Posterior cingulate gyrus (tissue), 11 donors: ENCODE measurements at regions of chr2 and their contacts with region 1.

Region 1: GRCh38 chr2:88055371-88056128 is at the start of gene KRCC1:
- DNase-seq: peak; percentile 95 to 100 (median 96)

Region 2: DNA sequence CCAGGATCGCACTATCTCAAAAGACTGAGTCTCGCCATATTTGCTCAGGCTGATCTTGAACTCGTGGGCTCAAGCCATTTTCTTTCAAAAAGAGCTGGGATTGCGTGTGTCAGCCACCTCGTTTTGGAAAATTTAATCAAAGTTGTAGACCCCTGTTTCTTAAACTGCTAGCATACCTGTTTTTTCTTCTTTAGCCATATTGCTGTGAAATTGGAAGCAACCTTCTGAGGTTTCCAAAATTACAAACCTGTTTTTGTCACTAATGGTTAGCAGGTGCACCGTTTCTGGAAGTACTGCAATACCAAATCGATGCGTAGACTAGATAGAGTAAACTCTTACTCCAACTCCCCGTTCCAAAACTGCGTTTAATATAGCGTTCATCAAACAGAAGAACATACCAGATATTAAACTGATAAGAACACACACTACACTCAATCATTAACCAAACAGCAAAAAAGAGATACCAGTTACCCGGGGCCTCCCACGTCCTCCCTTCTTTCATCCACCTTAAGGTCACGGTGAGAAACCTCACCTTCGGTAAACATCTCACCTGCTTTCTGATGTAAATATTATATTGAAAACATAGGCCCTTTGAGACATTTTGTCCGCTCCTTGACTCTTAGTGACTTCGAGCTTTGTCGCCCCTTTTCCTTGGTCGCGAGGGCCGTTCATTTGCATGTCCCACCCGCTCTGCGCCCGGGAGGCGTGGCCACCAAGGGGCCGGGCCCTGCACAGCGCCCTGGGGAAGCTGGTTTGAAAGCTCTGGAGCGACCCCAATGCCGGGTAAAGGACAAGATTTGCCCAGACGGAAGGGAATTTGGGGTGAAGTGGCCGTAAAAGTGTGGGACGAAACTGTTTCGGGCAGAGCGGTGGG is 39.2 kb before region 1 on chr2 and contains the start of gene RNU2-63P:
- intact Hi-C with region 1: loop called (anchors 5 kb)
- DNase-seq: peak; percentile 29 to 95 (median 68)

Region 3: DNA sequence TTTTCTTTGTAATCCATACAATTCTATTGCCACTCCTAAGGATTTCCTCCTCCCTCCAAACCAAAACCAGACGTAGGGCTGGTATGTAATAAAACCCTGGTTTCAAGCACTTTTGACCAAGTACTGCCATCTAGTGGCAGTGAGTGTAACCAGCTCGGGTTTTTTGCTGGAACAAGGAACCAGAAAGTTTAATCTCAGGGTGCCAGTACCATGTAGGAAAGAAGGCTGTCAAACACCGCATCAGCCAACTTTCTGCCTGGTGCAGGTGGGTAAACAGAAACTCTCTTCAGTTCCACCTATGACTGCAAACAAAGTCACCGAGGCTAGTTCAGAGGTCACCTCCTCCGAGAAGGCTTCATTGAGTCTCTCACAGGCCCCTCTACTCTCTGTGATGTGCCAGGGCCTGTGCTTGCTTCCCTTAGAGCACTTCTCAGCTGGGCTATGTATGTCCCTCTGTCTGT is 104.4 kb after region 1 on chr2:
- intact Hi-C with region 1: loop called (anchors 1 kb)
- DNase-seq: peak in 6 of 10 donors; percentile 47 to 83 (median 66)